Ovary (tissue), 10 donors: ENCODE measurements at regions of chr4 and their contacts with region 1.

Region 1: GRCh38 chr4:155809835-155810234 is 51.0 kb downstream of the GUCY1B1 start:
- DNase-seq: no peak
- H3K4me3 ChIP-seq: no peak overlapping the region
- H3K27ac ChIP-seq: no peak overlapping the region
- H3K4me1 ChIP-seq: no peaks in the 10 kb centered on the region
- H3K27me3 ChIP-seq: no peaks in the 10 kb centered on the region
- CTCF ChIP-seq: peak; percentile 15 to 54 (median 25)
- EP300 ChIP-seq: no peak
- POLR2A ChIP-seq: no peak

Region 2: DNA sequence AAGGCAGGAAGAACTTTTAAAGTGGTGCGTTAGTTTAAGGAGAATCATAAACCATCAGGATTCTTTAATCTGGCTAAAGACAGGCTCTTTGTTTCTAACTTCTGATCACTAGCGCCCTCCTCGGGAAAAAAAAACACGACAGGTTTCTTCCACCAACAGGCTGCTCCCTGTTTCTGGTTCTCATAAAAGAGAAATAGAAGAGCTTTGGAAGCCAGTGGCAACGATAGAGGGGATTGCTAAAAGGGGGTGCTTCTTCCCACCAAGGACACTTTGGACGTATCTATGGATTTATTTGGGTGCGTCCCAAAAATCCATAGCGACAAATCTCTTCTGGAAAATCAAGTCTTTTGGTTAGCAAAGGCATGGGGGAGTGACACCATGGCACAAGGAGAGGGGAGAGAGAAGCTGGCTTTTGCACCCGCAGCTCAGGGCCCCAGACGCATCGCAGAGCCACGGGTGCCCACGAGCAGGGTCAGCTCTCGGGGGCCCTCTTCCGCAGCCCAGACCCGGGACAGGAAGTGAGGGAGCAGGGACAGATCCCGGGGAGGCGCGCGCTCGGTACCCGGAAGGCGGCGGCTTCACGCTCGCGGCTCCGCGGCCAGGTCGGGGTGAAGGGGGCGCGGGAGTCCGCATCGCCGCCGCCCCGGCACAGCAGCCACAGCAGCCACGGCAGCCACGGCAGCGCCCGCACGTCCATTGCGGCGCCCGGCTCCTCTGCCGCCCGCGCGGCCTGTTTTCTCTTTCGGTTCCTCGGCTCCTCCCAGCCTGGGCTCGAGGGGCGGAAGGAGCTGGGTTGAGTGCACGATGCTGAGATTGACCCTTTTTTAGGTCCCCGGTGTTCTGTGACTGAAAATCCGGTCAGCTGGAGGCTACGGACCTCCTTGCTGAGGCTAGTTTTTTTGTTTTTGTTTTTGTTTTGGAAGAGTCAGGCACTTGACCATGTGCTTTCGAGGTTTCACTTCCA is 143.6 kb after region 1 on chr4 and contains the start of gene CTSO:
- intact Hi-C with region 1: loop called (anchors 5 to 10 kb)
- DNase-seq: peak; percentile 75 to 84 (median 80)
- H3K4me3 ChIP-seq: peak within 1 kb of the TSS; percentile 62
- H3K27ac ChIP-seq: peak within 1 kb of the TSS; percentile 90 to 96
- H3K4me1 ChIP-seq: no peaks in the 10 kb centered on the region
- H3K27me3 ChIP-seq: no peaks in the 10 kb centered on the region
- CTCF ChIP-seq: peak; percentile 32 to 44 (median 34)
- EP300 ChIP-seq: no peak
- POLR2A ChIP-seq: peak; percentile 31
- total RNA-seq, gene CTSO: 12.0 to 28.0 (median 18.5) TPM